Caco-2 (cell line): ENCODE measurements at regions of chr3 and their contacts with region 1.

Region 1: GRCh38 chr3:54870423-54870822 is 57.4 kb downstream of the LRTM1 start:
- DNase-seq: peak; percentile 24 to 38
- H3K4me3 ChIP-seq: no peak overlapping the region
- H3K4me3 Mint-ChIP-seq: no peak overlapping the region
- H3K27ac Mint-ChIP-seq: no peak overlapping the region
- H3K4me1 ChIP-seq: no peaks in the 10 kb centered on the region
- H3K4me1 Mint-ChIP-seq: no peaks in the 10 kb centered on the region
- H3K27me3 ChIP-seq: no peaks in the 10 kb centered on the region
- H3K27me3 Mint-ChIP-seq: peaks cover 11% of the 10 kb centered on the region
- CTCF ChIP-seq: peak in 1 of 2 experiments; percentile 43

Region 2: GRCh38 chr3:54746722-54747121 is 123.7 kb before region 1 on chr3:
- CTCF ChIA-PET with region 1: no interaction called
- POLR2A ChIA-PET with region 1: no interaction called
- intact Hi-C with region 1: no loop called
- DNase-seq: no peak
- H3K4me3 ChIP-seq: no peak overlapping the region
- H3K4me3 Mint-ChIP-seq: no peak overlapping the region
- H3K27ac Mint-ChIP-seq: no peak overlapping the region
- H3K4me1 ChIP-seq: no peaks in the 10 kb centered on the region
- H3K4me1 Mint-ChIP-seq: no peaks in the 10 kb centered on the region
- H3K27me3 ChIP-seq: no peaks in the 10 kb centered on the region
- H3K27me3 Mint-ChIP-seq: peaks cover 3% of the 10 kb centered on the region
- CTCF ChIP-seq: no peak

Region 3: GRCh38 chr3:54891548-54892120 is 21.2 kb after region 1 on chr3:
- CTCF ChIA-PET with region 1: no interaction called
- POLR2A ChIA-PET with region 1: no interaction called
- intact Hi-C with region 1: no loop called
- DNase-seq: peak; percentile 73 to 85
- H3K4me3 ChIP-seq: no peak overlapping the region
- H3K4me3 Mint-ChIP-seq: peak overlapping the region; percentile 32
- H3K27ac Mint-ChIP-seq: peak overlapping the region; percentile 9
- H3K4me1 ChIP-seq: peaks cover 15% of the 10 kb centered on the region
- H3K4me1 Mint-ChIP-seq: no peaks in the 10 kb centered on the region
- H3K27me3 ChIP-seq: no peaks in the 10 kb centered on the region
- H3K27me3 Mint-ChIP-seq: peaks cover 11% of the 10 kb centered on the region
- CTCF ChIP-seq: peak in 1 of 2 experiments; percentile 66

Region 4: DNA sequence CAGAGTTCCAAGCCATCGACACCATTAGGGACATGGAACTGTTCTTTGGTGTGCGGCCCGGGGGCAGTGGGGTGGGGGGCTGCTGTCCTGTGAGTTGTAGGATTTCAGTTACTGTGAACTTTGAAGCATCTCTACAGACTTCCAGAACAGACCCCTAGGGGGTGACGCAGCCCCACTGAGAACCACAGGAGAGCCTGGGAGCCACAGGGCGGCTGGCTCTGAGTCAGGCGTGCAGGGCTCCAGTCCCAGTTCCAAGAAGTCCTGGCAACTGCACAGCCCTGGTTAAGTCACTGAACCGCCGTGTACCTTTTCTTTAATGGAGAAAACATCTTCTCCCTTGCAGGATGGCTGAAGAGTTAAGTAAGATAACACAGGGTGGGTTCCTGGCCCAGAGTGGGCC is 81.0 kb after region 1 on chr3:
- CTCF ChIA-PET with region 1: no interaction called
- POLR2A ChIA-PET with region 1: no interaction called
- intact Hi-C with region 1: loop called (anchors 10 kb)
- DNase-seq: peak; percentile 46 to 54
- H3K4me3 ChIP-seq: no peak overlapping the region
- H3K4me3 Mint-ChIP-seq: no peak overlapping the region
- H3K27ac Mint-ChIP-seq: no peak overlapping the region
- H3K4me1 ChIP-seq: no peaks in the 10 kb centered on the region
- H3K4me1 Mint-ChIP-seq: no peaks in the 10 kb centered on the region
- H3K27me3 ChIP-seq: no peaks in the 10 kb centered on the region
- H3K27me3 Mint-ChIP-seq: peaks cover 3% of the 10 kb centered on the region
- CTCF ChIP-seq: peak; percentile 49 to 72

Region 5: GRCh38 chr3:55013145-55013925 is 142.9 kb after region 1 on chr3:
- CTCF ChIA-PET with region 1: no interaction called
- POLR2A ChIA-PET with region 1: no interaction called
- intact Hi-C with region 1: loop called (anchors 1 kb)
- DNase-seq: peak in 1 of 2 experiments; percentile 21
- H3K4me3 ChIP-seq: no peak overlapping the region
- H3K4me3 Mint-ChIP-seq: no peak overlapping the region
- H3K27ac Mint-ChIP-seq: no peak overlapping the region
- H3K4me1 ChIP-seq: no peaks in the 10 kb centered on the region
- H3K4me1 Mint-ChIP-seq: no peaks in the 10 kb centered on the region
- H3K27me3 ChIP-seq: no peaks in the 10 kb centered on the region
- H3K27me3 Mint-ChIP-seq: peaks cover 9% of the 10 kb centered on the region
- CTCF ChIP-seq: peak in 1 of 2 experiments; percentile 29